Left ventricle myocardium superior (tissue), 1 donor: ENCODE measurements at regions of chr1 and their contacts with region 1.

Region 1: DNA sequence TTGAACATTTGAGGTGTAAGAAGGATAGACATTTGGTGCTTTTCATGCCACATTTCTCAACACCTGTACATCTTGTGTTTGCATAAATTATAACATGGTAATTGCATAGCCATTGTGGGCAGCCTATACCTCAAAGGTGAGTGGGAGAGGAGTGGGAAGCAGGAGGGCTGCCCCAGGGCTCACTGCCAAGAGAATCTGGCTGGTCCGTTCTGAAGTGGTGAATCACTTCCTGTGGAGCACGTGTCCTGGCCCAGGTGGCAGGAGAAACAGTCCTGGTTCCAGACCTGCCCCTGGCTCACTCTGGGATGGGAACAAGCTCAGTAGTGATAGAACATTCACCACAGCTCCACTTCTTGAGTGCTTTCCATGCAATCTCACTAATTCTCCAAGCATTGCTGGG is 11.6 kb upstream of the OLFML2B start:
- DNase-seq: no peak
- ATAC-seq: no peak

Region 2: DNA sequence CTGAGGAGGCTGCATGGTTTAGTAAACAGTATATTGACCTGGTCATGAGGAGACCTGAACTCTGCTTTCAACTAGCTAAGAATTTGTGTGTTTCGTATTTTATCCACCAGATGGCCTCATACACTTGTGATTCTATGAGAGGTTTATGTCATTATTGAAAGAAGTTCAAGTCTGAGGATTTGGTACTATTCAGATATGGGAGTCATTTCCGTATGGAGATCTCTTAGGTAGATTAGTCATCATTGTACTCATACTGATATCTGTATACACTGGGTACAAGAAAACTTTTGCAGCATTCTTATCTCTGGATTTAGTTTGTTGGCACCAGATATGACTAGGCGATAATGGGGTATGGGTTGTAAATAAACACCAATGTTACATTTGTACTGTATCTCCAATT is 242.5 kb before region 1 on chr1:
- intact Hi-C with region 1: loop called (anchors 5 kb)
- DNase-seq: no peak
- ATAC-seq: peak; percentile 45

Region 3: DNA sequence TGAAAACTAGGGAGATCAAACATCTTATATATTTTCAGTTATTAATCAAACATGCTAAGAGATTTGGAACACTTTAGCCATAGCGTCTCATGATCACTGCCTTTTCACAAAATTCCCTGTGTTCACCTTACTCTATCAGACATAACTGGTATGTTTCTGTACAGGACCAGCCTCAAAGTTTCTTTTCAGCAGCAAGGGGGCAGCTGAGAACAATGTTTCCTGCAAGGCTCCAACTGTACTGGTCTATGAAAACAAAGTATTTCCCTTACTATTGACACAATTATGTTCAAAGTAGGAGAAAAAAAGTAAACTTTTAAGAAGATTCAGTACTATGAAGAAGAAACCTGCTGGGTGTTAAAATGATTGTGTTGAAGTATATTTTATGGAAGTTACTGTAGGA is 170.7 kb before region 1 on chr1:
- intact Hi-C with region 1: loop called (anchors 10 kb)
- DNase-seq: no peak
- ATAC-seq: peak; percentile 53

Region 4: GRCh38 chr1:161946071-161946987 is 88.9 kb before region 1 on chr1:
- intact Hi-C with region 1: no loop called
- DNase-seq: no peak
- ATAC-seq: no peak

Region 5: DNA sequence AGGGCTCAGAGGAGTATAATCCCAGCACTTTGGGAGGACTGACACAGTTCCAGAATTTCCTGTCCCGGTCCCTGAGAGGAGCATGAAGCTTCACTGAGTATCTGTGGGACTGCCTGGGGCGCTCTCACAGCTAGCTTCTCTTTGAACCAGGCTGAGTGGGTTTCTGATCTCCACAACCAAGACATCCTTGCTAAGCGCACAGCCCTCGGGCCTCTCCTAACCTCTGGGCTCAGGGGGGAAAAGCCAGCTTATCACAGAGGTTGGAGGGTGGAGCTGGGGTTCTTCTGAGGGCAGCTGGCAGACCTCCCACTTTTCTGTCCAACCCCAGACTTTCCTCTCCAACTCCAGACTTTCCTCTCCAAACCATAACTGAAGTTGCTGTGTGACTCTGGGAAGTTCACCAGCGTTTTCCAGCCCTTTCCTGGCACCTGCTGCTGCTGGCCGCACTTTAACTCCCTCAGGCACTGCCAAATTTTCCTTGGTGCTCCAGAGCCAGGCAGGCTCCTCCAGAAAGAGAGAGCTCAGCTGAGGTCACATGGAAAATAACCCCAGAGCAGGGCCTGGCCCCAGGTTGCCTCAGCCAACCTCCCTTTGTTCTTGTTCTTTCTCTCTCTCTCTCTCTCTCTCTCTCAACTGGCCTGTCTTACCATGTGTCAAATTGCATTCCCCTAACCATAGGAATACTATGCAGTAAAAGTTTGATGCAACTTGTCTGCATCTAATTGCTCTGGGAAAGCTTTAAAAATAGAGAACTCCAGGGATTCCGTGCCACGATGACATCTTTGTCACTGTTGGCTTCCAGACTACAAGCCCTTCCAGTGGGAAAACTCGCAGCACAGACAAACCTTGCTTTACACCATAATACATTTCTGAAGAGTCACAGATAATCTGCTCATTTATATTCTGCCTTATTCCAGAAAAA is 61.1 kb before region 1 on chr1:
- intact Hi-C with region 1: no loop called
- DNase-seq: peak; percentile 76
- ATAC-seq: peak; percentile 95

Region 6: GRCh38 chr1:162319493-162320175 is 284.4 kb after region 1 on chr1:
- intact Hi-C with region 1: no loop called
- DNase-seq: no peak
- ATAC-seq: no peak